Left cardiac atrium (tissue), 4 donors: ENCODE measurements at regions of chr7 and their contacts with region 1.

Region 1: GRCh38 chr7:20598459-20599309 is 16.8 kb upstream of the ABCB5 start:
- DNase-seq: no peak
- ATAC-seq: peak; percentile 54 to 56

Region 2: GRCh38 chr7:19713676-19714075 is 885.0 kb before region 1 on chr7:
- intact Hi-C with region 1: loop called (anchors 2 to 10 kb)
- DNase-seq: no peak
- ATAC-seq: no peak

Region 3: DNA sequence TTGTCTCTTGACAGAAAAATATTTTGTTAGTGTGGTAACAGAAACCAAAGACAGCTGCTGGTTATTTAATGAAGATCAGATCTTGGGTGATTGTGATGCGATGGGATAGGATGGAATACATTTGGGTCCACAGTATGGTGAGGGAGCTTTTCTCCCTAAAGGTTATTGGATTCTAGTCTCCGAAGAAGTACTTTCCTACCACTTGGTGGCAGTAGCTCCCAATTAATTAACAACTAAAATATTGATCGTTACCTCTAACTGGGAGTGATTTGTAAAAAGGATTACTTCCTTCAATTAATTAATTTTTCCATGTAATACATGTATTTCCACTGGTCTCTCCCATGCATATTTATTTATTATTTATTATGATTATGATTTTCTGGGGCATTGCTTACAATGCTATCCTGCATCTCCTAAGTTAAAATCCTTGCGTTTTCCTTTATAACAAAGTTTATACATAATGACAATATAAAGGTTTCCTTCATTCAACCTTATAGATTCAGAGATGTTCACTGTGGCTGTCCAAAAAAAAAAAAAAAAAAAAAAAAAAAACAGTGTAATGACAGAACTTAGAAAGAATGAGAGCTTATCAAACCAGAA is 850.8 kb before region 1 on chr7:
- intact Hi-C with region 1: loop called in 1 of 2 experiments (anchors 2 kb)
- DNase-seq: no peak
- ATAC-seq: no peak

Region 4: GRCh38 chr7:20158684-20159083 is 440.0 kb before region 1 on chr7:
- intact Hi-C with region 1: loop called (anchors 2 to 10 kb)
- DNase-seq: no peak
- ATAC-seq: peak; percentile 77 to 81